ENCODE measurements at regions of chr11 and their contacts with region 1.

Region 1: GRCh38 chr11:27839226-27839870 is 139.1 kb upstream of the BDNF start:
- DNase-seq: no peak
- H3K4me3 Mint-ChIP-seq: no peak overlapping the region
- H3K27ac Mint-ChIP-seq: no peak overlapping the region
- H3K4me1 Mint-ChIP-seq: peaks cover 21% of the 10 kb centered on the region
- H3K27me3 Mint-ChIP-seq: peaks cover 7% of the 10 kb centered on the region
- CTCF ChIP-seq: no peak

Region 2: GRCh38 chr11:27524155-27524554 is 315.2 kb before region 1 on chr11:
- CTCF ChIA-PET with region 1: interaction called, 10 read pairs
- intact Hi-C with region 1: no loop called
- DNase-seq: no peak
- H3K4me3 Mint-ChIP-seq: no peak overlapping the region
- H3K27ac Mint-ChIP-seq: no peak overlapping the region
- H3K4me1 Mint-ChIP-seq: no peaks in the 10 kb centered on the region
- H3K27me3 Mint-ChIP-seq: peaks cover 1% of the 10 kb centered on the region
- CTCF ChIP-seq: no peak

Region 3: DNA sequence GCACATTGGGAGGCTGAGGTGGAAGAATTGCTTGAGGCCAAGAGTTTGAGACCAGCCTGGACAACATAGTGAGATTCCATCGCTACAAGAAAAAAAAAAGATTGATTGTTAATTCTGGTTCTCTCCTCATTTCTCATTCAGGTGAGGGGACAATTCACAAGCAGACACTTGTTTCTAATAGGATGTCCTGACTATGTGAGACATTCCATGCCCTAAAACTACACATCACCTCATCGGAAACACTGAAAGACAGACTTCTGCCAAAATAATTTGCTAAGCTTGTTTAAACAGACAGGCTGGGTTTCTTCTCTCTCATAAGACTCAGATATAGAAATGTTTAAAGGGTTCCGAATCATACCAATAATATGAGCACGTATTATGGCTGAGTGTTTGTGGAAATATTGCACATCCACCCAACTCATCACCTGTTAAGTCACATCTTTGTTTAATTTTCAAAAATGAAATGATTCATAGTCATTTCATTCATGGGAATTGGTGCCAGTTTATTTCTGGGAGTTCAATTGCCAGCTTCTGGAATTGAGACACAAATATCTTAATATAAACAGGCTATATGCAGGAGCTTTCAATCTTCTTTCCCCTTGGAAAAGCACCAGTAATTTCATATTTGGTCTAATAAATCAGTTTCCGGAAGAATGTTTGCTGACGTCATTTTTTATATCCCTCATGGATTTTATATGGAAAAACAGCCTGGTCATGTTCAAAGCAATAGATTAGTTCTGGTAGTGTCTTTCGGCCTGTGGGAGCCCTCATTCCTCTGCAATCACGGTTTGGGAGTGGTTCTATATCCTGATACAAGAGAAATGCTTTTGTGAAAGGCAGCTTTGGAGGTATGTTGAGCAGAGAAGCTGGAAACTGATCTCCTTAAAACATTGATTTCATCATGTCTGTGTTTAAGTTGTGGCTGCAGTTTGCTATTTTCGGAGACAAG is 226.1 kb before region 1 on chr11:
- CTCF ChIA-PET with region 1: no interaction called
- intact Hi-C with region 1: no loop called
- DNase-seq: no peak
- H3K4me3 Mint-ChIP-seq: no peak overlapping the region
- H3K27ac Mint-ChIP-seq: no peak overlapping the region
- H3K4me1 Mint-ChIP-seq: no peaks in the 10 kb centered on the region
- H3K27me3 Mint-ChIP-seq: peaks cover 24% of the 10 kb centered on the region
- CTCF ChIP-seq: no peak

Region 4: DNA sequence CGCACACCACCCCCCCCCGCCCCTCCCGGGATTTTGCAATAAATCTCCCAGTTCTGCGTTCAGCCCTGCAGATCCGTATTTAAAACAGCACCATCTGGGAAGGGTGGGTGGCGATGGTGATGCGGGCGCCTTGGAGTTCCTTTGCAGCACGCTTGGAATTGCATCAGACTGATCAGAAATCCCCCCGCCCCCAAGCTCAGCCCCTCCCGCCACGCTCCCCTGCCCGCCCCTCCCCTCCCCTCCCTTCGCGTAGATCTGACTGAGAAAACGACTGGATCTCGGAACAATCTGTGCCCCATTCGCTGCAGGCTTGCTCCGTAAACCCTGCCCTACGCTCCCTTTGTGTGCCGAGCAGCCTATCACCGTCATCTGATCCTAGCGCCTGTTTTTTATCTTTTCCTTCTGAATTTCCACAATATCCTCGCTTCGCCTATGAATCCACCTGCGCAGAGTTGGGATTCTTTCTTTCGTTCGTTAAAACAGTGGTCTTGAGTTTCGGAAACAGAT is 120.9 kb before region 1 on chr11:
- CTCF ChIA-PET with region 1: no interaction called
- intact Hi-C with region 1: loop called (anchors 5 kb)
- DNase-seq: peak; percentile 48
- H3K4me3 Mint-ChIP-seq: peak overlapping the region; percentile 89
- H3K27ac Mint-ChIP-seq: peak overlapping the region; percentile 82
- H3K4me1 Mint-ChIP-seq: peaks cover 15% of the 10 kb centered on the region
- H3K27me3 Mint-ChIP-seq: peaks cover 56% of the 10 kb centered on the region
- CTCF ChIP-seq: no peak